GM12878 (cell line): ENCODE measurements at regions of chr6 and their contacts with region 1.

Region 1: DNA sequence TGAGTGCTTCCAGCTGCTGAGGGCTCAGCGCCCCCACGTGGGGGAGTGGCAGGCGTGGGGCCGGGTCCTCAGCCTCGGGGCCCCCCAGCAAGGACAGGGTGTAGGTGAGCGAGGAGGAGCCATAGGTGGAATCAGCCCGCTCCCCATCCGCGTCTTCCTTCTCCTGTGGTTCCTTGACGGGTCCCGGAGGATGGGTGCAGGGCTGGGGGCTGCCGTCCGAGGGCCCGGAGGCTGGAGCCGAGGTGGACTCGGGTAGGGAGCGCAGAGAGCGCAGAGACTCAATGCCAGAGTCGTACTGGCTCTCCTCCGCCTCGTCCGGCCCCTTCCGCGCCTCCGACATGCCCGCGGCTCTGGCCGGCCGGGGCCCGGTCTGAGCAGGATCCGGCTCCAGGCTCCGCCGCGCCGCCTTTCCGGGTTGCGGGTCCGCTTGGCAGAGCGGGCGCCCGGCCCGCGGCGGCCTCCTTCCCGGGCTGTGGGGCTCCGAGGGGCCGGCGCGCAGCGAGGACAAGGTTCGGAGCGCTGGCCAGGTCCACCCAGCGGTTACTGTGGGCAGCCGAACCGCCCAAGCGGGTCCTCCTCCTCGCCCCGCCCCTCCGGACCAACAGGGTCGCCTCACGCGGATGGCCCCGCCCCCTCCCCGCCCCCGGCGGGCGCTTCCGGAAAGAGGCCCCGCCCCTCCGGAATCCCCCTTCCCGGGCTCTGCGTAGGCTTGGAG is at the start of gene NFKBIE:
- DNase-seq: no peak
- ATAC-seq: peak; percentile 48
- H3K4me3 ChIP-seq: peak within 1 kb of the TSS; percentile 98
- H3K27ac ChIP-seq: peak within 1 kb of the TSS; percentile 99
- H3K4me1 ChIP-seq: peaks cover 48% of the 10 kb centered on the region
- H3K27me3 ChIP-seq: peaks cover 0 to 2% of the 10 kb centered on the region in 2 experiments; a peak in 1 of 4 replicates
- CTCF ChIP-seq: peak; percentile 45 to 60 (median 46); a peak in 4 of 6 replicates
- EP300 ChIP-seq: no peak
- POLR2A ChIP-seq: no peak
- RAD21 ChIP-seq: peak; percentile 64
- polyA plus RNA-seq, gene NFKBIE: 10.4 to 26.0 TPM

Region 2: DNA sequence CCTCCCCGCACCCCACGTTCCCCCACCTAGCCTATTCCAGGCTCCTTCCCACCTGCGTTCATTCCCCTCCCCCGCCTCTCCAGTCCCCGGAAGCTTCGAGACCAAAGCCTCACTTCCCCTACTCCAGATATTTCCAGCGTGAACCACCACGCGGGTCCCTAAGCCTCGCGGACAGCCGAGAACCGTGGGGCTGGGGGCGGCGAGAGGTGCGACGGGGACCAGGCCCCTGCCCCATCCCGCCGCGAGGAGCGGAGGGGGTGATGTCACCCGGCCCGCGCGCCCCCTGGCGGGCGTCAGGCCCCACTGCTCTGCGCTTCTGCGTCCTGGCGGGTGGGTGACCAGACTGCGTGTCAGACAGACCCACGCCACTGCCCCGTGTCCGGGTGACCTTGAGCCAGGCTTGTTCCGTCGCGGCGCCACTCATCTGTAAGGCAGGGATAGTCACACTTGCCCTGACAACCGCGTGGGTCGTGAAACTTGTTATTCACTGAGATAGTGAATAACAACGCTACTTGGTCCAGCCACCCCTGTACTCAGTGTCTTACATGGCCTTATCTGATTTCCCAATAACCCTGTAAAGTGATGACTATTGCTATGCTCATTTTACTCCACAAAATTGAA is 27.2 kb before region 1 on chr6:
- CTCF ChIA-PET with region 1: interaction called, 15 read pairs
- POLR2A ChIA-PET with region 1: interaction called, 5 read pairs
- RAD21 ChIA-PET with region 1: interaction called, 3 read pairs
- SMC1A ChIA-PET with region 1: interaction called, 7 read pairs
- in situ Hi-C with region 1: no loop called
- intact Hi-C with region 1: no loop called
- DNase-seq: no peak
- ATAC-seq: peak; percentile 97
- H3K4me3 ChIP-seq: peak overlapping the region; percentile 54; the same call in 1 of the 2 replicates
- H3K27ac ChIP-seq: peak overlapping the region; percentile 71
- H3K4me1 ChIP-seq: peaks cover 8% of the 10 kb centered on the region
- H3K27me3 ChIP-seq: no peaks in the 10 kb centered on the region
- CTCF ChIP-seq: peak; percentile 91 to 95 (median 94)
- EP300 ChIP-seq: no peak
- POLR2A ChIP-seq: peak; percentile 83
- RAD21 ChIP-seq: peak; percentile 53

Region 3: GRCh38 chr6:44251576-44252524 is 13.3 kb before region 1 on chr6:
- CTCF ChIA-PET with region 1: interaction called, 36 read pairs
- POLR2A ChIA-PET with region 1: interaction called, 131 read pairs
- RAD21 ChIA-PET with region 1: interaction called, 12 read pairs
- SMC1A ChIA-PET with region 1: interaction called, 18 read pairs
- in situ Hi-C with region 1: no loop called
- intact Hi-C with region 1: no loop called
- DNase-seq: no peak
- ATAC-seq: no peak
- H3K4me3 ChIP-seq: peak overlapping the region; percentile 95; the same call in 1 of the 2 replicates
- H3K27ac ChIP-seq: no peak overlapping the region
- H3K4me1 ChIP-seq: peaks cover 19% of the 10 kb centered on the region
- H3K27me3 ChIP-seq: no peaks in the 10 kb centered on the region
- CTCF ChIP-seq: no peak
- EP300 ChIP-seq: no peak
- POLR2A ChIP-seq: no peak
- RAD21 ChIP-seq: no peak

Region 4: DNA sequence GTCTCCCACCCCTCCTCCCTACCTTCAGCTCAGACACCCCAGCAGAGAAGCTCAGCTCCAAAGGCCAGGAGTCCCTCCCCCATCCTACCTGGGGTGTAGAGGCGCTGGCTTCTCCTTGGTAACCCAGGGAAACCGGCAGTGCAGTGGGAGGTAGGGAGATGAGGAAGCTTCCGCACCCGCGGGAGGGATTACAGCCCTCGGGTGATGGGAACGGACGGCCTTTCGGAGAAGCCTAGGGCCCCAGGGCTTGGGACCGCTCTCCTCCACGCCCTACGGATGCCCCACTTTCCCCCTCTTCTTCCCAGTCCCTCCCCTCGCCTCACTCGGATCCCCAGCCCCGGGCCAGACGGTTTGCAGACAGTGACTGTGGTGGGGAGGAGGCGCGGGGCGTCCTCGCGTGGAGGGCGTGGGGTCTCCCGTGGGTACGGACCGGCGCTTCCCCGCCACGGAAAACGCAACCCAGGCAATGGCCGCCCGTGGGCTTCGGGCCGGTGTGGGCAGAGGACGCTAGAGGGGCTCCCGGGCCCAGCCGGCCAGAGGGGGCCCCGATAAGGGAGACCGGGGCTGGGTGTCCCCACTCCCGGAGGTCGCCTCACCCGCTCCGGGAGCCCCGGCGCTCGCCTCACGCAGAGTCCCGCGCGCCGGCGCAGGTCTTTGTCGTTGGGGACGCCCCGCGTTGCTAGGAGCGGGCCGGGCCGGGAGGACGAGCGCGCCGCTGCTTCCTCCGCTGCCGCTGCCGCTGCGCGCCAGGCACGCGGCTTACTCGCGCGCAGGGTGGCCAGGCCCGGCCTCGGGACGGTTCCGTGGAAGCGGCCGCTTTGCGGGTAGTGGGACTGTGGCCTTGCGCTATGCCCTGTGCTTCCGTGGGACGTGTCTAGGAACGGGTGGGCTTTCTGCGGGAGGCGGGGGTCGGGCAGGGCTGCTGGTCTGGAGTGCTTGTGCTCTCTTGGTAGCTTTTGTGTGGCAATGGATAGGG is 32.2 kb after region 1 on chr6:
- CTCF ChIA-PET with region 1: interaction called, 17 read pairs
- POLR2A ChIA-PET with region 1: no interaction called
- RAD21 ChIA-PET with region 1: interaction called, 3 read pairs
- SMC1A ChIA-PET with region 1: interaction called, 5 read pairs
- in situ Hi-C with region 1: no loop called
- intact Hi-C with region 1: no loop called
- DNase-seq: no peak
- ATAC-seq: peak; percentile 50
- H3K4me3 ChIP-seq: no peak overlapping the region
- H3K27ac ChIP-seq: no peak overlapping the region
- H3K4me1 ChIP-seq: no peaks in the 10 kb centered on the region
- H3K27me3 ChIP-seq: peaks cover 9 to 11% of the 10 kb centered on the region in 2 experiments
- CTCF ChIP-seq: no peak
- EP300 ChIP-seq: no peak
- POLR2A ChIP-seq: peak; percentile 59
- RAD21 ChIP-seq: no peak

Region 5: DNA sequence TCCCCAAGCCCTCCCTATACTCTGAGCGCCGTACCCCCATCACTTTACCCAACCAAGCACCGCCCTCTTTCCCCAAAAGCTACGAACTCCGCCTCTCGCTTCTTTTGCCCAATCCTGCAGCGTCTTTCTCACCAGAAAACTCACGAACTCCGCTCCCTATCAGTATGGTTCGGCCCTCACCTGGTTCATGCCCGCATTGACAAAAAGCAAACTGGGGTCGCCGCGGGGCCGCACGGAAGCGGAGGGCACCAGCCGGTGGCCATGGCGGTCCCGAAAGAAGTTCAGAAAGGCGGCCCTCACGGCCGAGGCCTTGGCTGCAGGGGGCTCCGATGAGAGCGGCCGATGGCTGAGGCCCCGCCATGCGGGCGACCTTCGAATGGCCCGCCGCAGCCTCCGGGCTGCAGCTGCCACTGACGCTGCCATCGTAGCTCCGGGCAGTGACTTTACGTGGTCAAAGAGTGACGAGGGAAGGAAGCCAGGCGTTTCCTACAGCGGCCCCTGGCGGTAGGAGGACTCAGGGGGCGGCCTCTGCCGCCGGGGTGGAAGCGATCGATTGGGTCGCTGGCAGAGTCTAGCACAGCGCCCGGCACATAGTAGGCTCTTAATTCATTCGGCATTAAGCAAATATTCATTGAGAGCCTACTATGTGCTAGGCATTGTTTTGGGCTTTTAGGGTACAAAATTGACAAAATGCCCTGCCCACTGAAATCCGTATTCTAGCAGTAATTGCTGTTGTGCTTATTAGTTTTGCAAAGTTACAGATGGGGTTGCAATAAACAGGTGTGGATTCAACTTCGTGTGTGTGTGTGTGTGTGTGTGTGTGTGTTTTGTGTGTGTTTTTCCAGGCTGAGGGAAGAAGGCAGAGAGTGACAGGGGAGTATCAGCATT is 48.0 kb after region 1 on chr6 and contains the start of gene AARS2:
- CTCF ChIA-PET with region 1: interaction called, 87 read pairs
- POLR2A ChIA-PET with region 1: no interaction called
- RAD21 ChIA-PET with region 1: interaction called, 5 read pairs
- SMC1A ChIA-PET with region 1: interaction called, 11 read pairs
- in situ Hi-C with region 1: no loop called
- intact Hi-C with region 1: loop called (anchors 2 kb)
- DNase-seq: peak; percentile 49
- ATAC-seq: peak; percentile 96
- H3K4me3 ChIP-seq: peak within 1 kb of the TSS; percentile 97
- H3K27ac ChIP-seq: peak within 1 kb of the TSS; percentile 67
- H3K4me1 ChIP-seq: peaks cover 5% of the 10 kb centered on the region
- H3K27me3 ChIP-seq: no peaks in the 10 kb centered on the region; a peak in 1 of 4 replicates
- CTCF ChIP-seq: peak; percentile 99; a peak in 5 of 6 replicates
- EP300 ChIP-seq: no peak
- POLR2A ChIP-seq: peak; percentile 99
- RAD21 ChIP-seq: no peak
- polyA plus RNA-seq, gene AARS2: 0.71 to 0.75 TPM

Region 6: GRCh38 chr6:44456070-44456965 is 191.2 kb after region 1 on chr6:
- CTCF ChIA-PET with region 1: interaction called, 12 read pairs
- POLR2A ChIA-PET with region 1: no interaction called
- RAD21 ChIA-PET with region 1: interaction called, 5 read pairs
- SMC1A ChIA-PET with region 1: interaction called, 6 read pairs
- in situ Hi-C with region 1: no loop called
- intact Hi-C with region 1: loop called (anchors 2 kb)
- DNase-seq: no peak
- ATAC-seq: peak; percentile 95
- H3K4me3 ChIP-seq: no peak overlapping the region
- H3K27ac ChIP-seq: no peak overlapping the region
- H3K4me1 ChIP-seq: no peaks in the 10 kb centered on the region
- H3K27me3 ChIP-seq: no peaks in the 10 kb centered on the region
- CTCF ChIP-seq: peak; percentile 75 to 79 (median 76)
- EP300 ChIP-seq: no peak
- POLR2A ChIP-seq: no peak
- RAD21 ChIP-seq: peak; percentile 72